Aorta (tissue), 5 donors: ENCODE measurements at regions of chr6 and their contacts with region 1.

Region 1: DNA sequence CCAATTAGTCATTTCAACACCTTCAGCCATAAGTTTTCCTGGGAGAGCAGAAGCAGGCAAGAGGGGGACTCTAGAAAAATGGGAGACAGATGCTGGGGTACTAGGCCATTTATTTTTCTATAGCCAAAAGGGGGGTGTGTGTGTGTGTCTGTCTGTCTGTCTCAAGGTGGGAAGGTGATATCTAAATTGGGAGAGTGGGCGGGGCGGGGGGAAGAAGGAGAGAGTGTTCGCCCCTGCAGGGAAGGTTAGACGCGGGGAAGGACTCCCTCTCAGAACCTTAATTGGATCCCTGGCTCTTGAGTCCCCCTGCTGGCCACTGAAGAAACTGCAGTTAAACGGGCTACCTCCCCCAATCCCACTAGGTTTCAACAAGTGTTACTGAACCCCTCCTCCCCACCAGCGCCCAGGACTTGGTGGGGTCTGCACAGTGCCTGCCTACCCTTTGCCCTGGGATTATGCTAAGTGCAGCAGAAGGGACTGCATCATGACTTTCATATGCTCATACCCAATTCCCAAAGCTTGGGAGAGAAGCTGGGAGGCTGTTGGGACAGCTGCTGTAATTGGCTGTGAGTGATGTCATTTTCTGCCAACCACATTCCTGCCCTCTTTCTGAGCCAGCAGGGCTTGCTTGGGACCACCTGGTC is 45.8 kb downstream of the FOXP4 start:
- DNase-seq: peak; percentile 78 to 90
- ATAC-seq: peak; percentile 86
- H3K4me3 ChIP-seq: no peak overlapping the region
- H3K27ac ChIP-seq: no peak overlapping the region
- H3K4me1 ChIP-seq: no peaks in the 10 kb centered on the region
- H3K27me3 ChIP-seq: no peaks in the 10 kb centered on the region

Region 2: GRCh38 chr6:41367700-41368099 is 224.3 kb before region 1 on chr6:
- intact Hi-C with region 1: loop called (anchors 2 to 5 kb)
- DNase-seq: no peak
- ATAC-seq: peak; percentile 64
- H3K4me3 ChIP-seq: no peak overlapping the region
- H3K27ac ChIP-seq: no peak overlapping the region
- H3K4me1 ChIP-seq: no peaks in the 10 kb centered on the region
- H3K27me3 ChIP-seq: no peaks in the 10 kb centered on the region

Region 3: GRCh38 chr6:41424370-41425058 is 167.5 kb before region 1 on chr6:
- intact Hi-C with region 1: loop called (anchors 2 to 5 kb)
- DNase-seq: peak; percentile 86 to 90
- ATAC-seq: peak; percentile 45
- H3K4me3 ChIP-seq: no peak overlapping the region
- H3K27ac ChIP-seq: no peak overlapping the region
- H3K4me1 ChIP-seq: no peaks in the 10 kb centered on the region
- H3K27me3 ChIP-seq: no peaks in the 10 kb centered on the region

Region 4: GRCh38 chr6:41463062-41463930 is 128.7 kb before region 1 on chr6:
- intact Hi-C with region 1: loop called (anchors 1 to 2 kb)
- DNase-seq: peak; percentile 79 to 91
- ATAC-seq: peak; percentile 80
- H3K4me3 ChIP-seq: no peak overlapping the region
- H3K27ac ChIP-seq: no peak overlapping the region
- H3K4me1 ChIP-seq: no peaks in the 10 kb centered on the region
- H3K27me3 ChIP-seq: no peaks in the 10 kb centered on the region